Ascending aorta (tissue), 2 donors: ENCODE measurements at regions of chr15 and their contacts with region 1.

Region 1: GRCh38 chr15:84633311-84634227 is 20.5 kb downstream of the WDR73 start:
- DNase-seq: peak in 1 of 2 donors; percentile 86
- H3K4me3 ChIP-seq: peak overlapping the region; percentile 79 to 94
- H3K27ac ChIP-seq: peak overlapping the region; percentile 93 to 97
- H3K4me1 ChIP-seq: peaks cover 12 to 39% of the 10 kb centered on the region in 2 donors
- H3K27me3 ChIP-seq: no peaks in the 10 kb centered on the region
- CTCF ChIP-seq: peak in 1 of 3 experiments; percentile 9

Region 2: DNA sequence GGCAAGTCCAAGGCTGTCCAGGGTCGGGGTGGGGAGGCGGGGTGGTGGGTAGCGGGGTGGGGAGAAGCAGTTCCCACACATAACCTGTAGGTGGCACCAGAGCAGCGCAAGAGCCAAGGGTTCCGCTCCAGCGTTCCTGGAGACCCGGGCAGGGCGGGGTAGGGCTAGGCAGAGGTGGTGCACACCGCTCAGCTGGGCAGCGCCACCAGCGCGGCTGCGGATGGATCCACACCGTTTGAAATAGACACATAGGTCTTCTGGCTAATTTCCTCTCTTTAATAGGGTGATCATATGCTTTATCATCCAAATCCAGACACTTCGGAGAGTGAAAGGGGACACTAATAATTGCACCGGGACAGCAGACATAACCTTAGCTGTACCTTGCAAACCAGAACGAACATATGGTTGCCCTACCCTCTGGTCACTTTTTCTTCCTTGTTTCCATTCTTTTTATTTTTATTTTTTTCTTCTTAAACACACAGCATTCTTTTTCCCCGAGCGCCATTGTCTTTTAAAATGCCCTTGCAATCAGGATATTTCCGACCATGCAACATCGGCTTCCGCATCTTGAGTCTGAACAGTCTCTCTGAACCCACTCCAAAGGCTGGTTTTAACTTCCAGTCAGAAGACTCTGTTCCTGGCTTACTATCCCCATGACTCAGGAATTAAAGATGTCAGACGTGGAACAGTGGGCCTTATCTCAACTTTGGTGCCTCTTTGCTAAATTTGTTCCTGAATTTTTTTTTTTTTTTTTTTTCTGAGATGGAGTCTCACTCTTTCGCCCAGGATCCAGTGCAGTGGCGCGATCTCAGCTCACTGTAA is 45.3 kb before region 1 on chr15:
- intact Hi-C with region 1: loop called (anchors 1 kb)
- DNase-seq: peak; percentile 36 to 92
- H3K4me3 ChIP-seq: peak overlapping the region; percentile 45 to 56
- H3K27ac ChIP-seq: no peak overlapping the region
- H3K4me1 ChIP-seq: no peaks in the 10 kb centered on the region
- H3K27me3 ChIP-seq: no peaks in the 10 kb centered on the region
- CTCF ChIP-seq: peak; percentile 65 to 96 (median 96)

Region 3: DNA sequence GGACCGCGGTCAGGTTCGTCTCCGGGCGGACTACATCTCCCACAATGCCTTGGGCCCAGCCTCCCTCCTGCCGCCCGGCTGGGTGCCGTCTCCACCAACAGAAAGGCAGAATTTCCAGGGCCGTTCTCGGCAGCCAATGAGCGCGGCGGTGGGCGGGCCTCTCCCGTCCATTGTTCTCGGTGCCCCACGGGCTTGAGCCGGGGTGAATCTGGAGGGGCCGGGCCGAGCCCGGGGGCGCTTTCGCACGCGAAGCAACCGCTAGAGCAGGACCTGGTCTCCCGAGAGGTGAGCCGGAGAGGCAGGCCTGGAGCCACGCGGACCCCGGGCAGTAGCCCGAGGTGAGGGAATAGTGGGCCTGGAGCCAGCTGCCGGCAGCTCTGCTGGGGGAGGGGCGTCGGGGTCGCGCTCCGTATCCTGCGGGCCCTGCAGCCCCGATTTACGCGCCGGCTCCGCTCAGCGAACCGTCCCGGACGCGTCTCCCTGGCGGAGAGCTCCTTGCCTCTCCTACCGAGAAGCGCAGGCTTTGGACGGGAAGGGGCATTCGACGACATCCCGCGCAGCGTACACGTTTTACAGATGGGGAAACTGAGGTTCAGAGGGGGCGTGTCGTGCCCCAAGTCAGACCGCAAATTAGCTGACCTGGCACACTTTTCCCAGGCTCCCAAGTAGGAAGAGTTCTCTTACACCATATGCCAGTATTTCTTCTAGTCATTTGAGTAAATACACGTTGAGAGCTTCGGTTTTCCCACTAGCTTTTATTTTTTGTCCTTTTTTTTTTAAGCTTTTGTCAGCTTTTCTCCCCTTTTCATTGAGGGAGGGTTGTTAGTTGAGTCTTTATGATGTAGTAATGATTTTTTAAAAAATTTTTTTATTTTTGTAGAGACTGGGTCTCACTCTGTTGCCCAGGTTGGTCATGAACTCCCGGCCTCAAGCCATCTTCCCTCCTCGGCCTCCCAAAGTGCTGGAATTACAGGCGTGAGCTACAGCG is 32.4 kb before region 1 on chr15 and contains the start of gene ZSCAN2:
- intact Hi-C with region 1: loop called (anchors 1 kb)
- DNase-seq: peak; percentile 90 to 98
- H3K4me3 ChIP-seq: peak within 1 kb of the TSS; percentile 85 to 91
- H3K27ac ChIP-seq: peak within 1 kb of the TSS; percentile 43 to 72
- H3K4me1 ChIP-seq: peaks cover 0 to 13% of the 10 kb centered on the region in 2 donors
- H3K27me3 ChIP-seq: no peaks in the 10 kb centered on the region
- CTCF ChIP-seq: no peak
- total RNA-seq, gene ZSCAN2: 4.6 TPM

Region 4: GRCh38 chr15:84671211-84671610 is 37.6 kb after region 1 on chr15:
- intact Hi-C with region 1: no loop called
- DNase-seq: no peak
- H3K4me3 ChIP-seq: no peak overlapping the region
- H3K27ac ChIP-seq: no peak overlapping the region
- H3K4me1 ChIP-seq: no peaks in the 10 kb centered on the region
- H3K27me3 ChIP-seq: no peaks in the 10 kb centered on the region
- CTCF ChIP-seq: no peak

Region 5: GRCh38 chr15:84716036-84716799 is 82.6 kb after region 1 on chr15 and contains the start of gene SEC11A:
- intact Hi-C with region 1: loop called (anchors 2 kb)
- DNase-seq: peak; percentile 88 to 98
- H3K4me3 ChIP-seq: peak within 1 kb of the TSS; percentile 70 to 77
- H3K27ac ChIP-seq: peak within 1 kb of the TSS; percentile 88
- H3K4me1 ChIP-seq: peaks cover 3 to 10% of the 10 kb centered on the region in 2 donors
- H3K27me3 ChIP-seq: no peaks in the 10 kb centered on the region
- CTCF ChIP-seq: no peak
- total RNA-seq, gene SEC11A: 31.6 TPM

Region 6: DNA sequence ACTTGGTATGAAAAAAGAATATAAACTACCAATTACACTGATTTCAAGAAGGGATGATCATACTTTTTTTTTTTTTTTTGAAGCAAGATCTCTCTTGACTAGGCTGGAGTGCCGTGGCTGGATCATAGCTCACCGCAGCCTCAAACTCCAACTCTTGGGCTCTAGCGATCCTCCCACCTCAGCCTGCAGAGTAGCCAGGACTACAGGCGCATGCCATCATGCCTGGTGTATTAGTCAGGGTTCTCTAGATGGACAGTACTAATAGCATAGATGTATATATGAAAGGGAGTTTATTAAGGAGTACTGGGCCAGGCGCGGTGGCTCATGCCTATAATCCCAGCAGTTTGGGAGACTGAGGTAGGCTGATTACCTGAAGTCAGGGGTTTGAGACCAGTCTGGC is 93.9 kb after region 1 on chr15:
- intact Hi-C with region 1: no loop called
- DNase-seq: no peak
- H3K4me3 ChIP-seq: no peak overlapping the region
- H3K27ac ChIP-seq: no peak overlapping the region
- H3K4me1 ChIP-seq: no peaks in the 10 kb centered on the region
- H3K27me3 ChIP-seq: no peaks in the 10 kb centered on the region
- CTCF ChIP-seq: no peak